MCF 10A (cell line): ENCODE measurements at regions of chr1 and their contacts with region 1.

Region 1: GRCh38 chr1:66271216-66271903 is 262.6 kb upstream of the SGIP1 start:
- DNase-seq: peak; percentile 97
- H3K4me3 Mint-ChIP-seq: peak overlapping the region; percentile 49
- H3K27ac Mint-ChIP-seq: peak overlapping the region; percentile 92
- H3K4me1 Mint-ChIP-seq: peaks cover 43% of the 10 kb centered on the region
- H3K27me3 Mint-ChIP-seq: no peaks in the 10 kb centered on the region
- CTCF ChIP-seq: no peak

Region 2: DNA sequence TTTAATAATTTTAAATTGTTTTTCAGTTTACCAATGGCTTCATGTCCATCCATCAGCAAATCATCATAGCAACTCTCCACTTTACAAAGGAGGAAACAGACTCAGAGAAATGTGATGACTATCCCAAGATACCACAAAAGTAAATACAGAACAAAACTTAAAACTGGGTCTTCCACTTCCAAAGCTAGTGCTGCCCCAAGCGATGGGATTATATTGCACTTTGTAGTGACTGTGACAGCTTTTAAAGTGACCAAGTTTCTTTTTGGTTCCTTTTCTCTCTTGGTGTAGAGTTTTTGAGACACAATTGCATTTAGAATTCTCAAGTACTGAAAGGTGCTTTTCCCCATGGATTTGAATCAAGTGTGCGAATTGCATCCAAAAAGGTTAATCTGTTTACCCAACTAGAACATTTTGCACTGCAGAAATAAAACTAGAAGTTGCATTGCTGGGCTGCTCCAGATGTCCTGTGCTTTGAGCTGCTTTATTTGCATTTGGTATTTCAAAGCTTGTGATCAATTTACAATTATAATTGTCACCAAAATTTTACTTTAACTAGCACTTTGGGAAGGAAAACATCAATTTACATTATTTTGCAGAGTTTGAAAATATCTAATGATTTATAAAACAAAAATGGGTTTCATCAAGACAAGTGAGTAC is 158.5 kb before region 1 on chr1:
- CTCF ChIA-PET with region 1: no interaction called
- POLR2A ChIA-PET with region 1: no interaction called
- intact Hi-C with region 1: no loop called
- DNase-seq: no peak
- H3K4me3 Mint-ChIP-seq: no peak overlapping the region
- H3K27ac Mint-ChIP-seq: no peak overlapping the region
- H3K4me1 Mint-ChIP-seq: no peaks in the 10 kb centered on the region
- H3K27me3 Mint-ChIP-seq: peaks cover 21% of the 10 kb centered on the region
- CTCF ChIP-seq: no peak

Region 3: GRCh38 chr1:66282343-66282852 is 11.0 kb after region 1 on chr1:
- CTCF ChIA-PET with region 1: interaction called, 15 read pairs
- POLR2A ChIA-PET with region 1: interaction called, 12 read pairs
- intact Hi-C with region 1: no loop called
- DNase-seq: peak; percentile 87
- H3K4me3 Mint-ChIP-seq: no peak overlapping the region
- H3K27ac Mint-ChIP-seq: peak overlapping the region; percentile 90
- H3K4me1 Mint-ChIP-seq: peaks cover 22% of the 10 kb centered on the region
- H3K27me3 Mint-ChIP-seq: no peaks in the 10 kb centered on the region
- CTCF ChIP-seq: no peak